AG04450 (cell line): ENCODE measurements at regions of chr14 and their contacts with region 1.

Region 1: DNA sequence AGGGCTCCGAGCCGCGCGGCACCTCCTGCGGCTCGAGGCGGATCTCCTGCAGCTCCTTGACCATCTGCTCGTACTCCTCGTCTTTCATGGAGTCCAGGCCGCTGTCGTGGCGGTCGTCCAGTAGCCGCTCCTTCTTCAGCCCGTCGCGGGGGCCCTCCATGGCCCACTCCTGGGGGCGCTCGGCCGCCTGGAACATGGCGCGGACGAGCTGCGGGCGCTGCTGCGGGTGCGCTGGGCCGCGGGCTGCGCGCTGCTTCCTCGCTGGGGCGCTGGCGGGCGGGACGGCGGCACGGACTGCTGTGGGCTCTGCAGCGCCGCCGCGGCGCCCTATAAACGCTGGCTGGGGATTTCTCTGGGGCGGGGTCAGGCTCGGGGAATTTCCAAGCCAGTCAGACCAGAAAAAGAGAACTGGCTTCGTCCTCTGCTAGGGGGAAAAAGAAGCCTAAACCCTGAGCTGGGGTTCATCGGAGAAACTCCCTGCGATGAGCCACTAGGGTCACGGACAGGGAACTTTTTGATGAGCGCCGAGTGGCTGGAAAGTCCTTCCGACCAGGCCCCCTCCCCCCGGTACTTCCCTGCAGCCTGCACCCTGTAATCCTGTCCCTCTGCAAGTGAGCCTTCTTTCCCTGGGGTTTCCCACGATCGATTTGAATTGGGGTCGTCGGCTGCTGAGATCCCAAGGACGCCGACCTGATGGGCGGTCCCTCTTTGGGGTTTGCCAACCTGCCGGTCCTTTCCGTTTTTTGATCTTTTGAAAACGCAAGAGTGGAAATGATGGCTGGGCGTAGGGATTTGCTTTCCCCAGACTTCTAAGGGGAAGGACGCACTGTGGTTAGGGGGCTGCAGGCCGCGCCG is at the start of gene NFKBIA:
- DNase-seq: no peak
- H3K4me3 ChIP-seq: peak within 1 kb of the TSS; percentile 94
- H3K27ac ChIP-seq: peak within 1 kb of the TSS; percentile 92
- H3K27me3 ChIP-seq: no peaks in the 10 kb centered on the region
- CTCF ChIP-seq: peak; percentile 43
- polyA plus RNA-seq, gene NFKBIA: 51.6 and 80.2 TPM in 2 replicates

Region 2: DNA sequence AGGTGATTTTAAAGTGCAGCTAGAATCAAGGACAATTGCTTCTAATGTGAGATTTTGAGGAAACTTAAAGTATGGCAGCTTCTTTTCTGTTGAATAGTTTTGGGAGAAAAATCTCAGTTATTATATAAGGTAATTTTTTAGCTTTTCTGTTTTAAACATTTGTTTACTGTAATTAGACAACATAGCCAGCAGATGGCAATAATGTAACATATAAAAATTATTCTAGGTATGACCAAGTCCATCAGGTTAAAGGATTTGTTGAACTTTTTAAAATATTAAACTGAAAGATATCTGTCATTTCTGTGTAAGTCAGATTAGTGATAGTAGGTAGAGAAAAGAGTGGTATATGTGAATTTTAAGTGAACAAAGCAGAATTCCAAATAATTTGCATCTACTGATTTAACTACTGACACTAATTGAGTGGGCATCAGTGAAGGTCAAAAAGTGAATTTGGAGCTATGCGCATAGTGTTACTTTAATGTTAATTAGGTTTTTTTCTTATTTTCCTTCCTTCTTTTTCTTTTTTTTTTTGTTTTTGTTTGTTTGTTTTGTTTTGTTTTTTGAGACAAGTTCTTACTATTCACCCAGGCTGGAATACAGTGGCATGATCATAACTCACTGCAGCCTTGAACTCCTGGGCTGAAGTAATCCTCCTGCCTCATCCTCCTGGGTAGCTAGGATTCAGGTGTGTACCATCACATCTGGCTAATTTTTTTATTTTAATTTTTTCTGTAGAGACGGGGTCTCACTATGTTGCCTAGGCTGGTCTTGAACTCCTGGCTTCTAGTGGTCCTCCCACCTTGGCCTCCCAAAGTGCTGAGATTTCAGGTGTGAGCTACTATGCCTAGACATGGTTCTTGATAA is 263.7 kb before region 1 on chr14:
- CTCF ChIA-PET with region 1: interaction called, 418 read pairs
- POLR2A ChIA-PET with region 1: interaction called, 4 read pairs
- DNase-seq: no peak
- H3K4me3 ChIP-seq: no peak overlapping the region
- H3K27ac ChIP-seq: no peak overlapping the region
- H3K27me3 ChIP-seq: no peaks in the 10 kb centered on the region
- CTCF ChIP-seq: peak; percentile 29

Region 3: DNA sequence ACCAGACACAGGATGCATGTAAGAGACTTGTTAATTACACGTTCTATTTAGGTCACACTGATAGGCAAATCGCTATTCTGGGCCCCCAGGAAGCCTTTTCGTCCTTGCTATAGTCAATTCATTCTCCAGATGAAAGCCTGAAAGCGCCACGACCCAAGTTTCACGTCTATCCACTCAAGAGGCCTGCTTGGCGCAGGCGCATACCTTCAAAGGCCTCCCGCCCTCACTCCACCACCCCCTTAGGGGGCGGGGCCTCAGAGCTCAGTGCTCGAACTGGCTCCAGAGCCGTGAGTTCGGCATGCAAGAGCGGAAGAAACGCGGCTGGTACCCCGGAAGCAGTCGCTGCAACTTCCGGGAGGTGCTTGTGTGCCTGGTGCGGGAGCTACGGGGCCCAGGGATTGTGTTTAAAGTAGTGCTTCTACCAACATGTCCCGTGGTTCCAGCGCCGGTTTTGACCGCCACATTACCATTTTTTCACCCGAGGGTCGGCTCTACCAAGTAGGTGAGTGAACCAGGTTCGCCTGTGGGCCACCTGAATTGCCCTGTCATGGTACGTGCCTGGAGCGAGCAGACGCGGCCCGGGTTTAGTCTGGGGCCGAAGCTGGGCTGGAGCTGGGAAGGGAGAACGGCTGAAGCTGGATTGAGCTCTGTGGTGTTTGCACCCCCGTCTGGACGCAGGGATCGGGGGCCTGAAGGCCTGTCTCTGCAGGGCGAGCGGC is 112.5 kb before region 1 on chr14 and contains the start of gene PSMA6:
- CTCF ChIA-PET with region 1: interaction called, 7 read pairs
- POLR2A ChIA-PET with region 1: interaction called, 25 read pairs
- DNase-seq: peak; percentile 96
- H3K4me3 ChIP-seq: peak within 1 kb of the TSS; percentile 94
- H3K27ac ChIP-seq: peak within 1 kb of the TSS; percentile 89
- H3K27me3 ChIP-seq: no peaks in the 10 kb centered on the region
- CTCF ChIP-seq: no peak
- polyA plus RNA-seq, gene PSMA6: 233 and 300 TPM in 2 replicates

Region 4: GRCh38 chr14:35336494-35337268 is 68.0 kb before region 1 on chr14:
- CTCF ChIA-PET with region 1: no interaction called
- POLR2A ChIA-PET with region 1: interaction called, 12 read pairs
- DNase-seq: peak; percentile 59
- H3K4me3 ChIP-seq: no peak overlapping the region
- H3K27ac ChIP-seq: peak overlapping the region; percentile 77
- H3K27me3 ChIP-seq: no peaks in the 10 kb centered on the region
- CTCF ChIP-seq: no peak

Region 5: DNA sequence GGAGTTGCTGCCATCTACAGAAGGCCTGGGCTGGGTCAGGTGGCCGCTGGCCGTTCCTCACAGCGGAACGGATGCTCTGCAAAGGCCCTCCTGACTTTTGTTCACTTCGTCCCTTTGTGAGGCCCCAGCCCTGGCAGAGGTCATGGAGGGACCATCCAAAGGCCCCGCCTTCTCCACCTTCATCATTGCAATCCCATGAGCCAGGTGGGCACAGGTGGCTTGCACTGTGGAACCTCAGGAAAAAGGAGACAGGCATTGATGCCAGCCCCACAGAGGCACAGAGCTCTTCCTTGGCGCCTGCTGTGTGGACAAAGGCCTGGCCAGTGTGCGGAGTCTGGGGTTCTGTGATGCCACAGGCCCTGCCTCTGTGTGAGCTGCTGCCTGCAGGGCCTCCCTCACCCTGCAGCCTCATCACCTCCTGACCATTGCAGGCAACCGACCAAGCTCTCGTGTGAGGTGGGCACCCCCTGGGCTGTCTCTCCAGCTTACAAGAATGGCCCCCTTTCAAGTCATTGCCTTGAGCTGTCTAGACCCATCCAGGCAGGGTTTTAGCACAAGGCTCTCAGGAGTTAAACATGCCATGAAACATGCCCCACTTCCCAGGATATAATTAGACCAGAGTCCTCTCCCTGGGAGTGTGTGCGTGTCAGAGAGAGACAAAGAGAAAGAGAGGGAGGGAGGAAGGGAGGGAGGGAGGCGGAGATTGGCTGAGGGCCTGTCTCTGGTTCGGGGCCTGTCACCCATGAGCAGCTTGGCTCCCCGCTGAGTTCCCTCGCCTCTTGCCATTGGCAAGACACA is 19.4 kb before region 1 on chr14:
- CTCF ChIA-PET with region 1: interaction called, 7 read pairs
- POLR2A ChIA-PET with region 1: interaction called, 22 read pairs
- DNase-seq: no peak
- H3K4me3 ChIP-seq: no peak overlapping the region
- H3K27ac ChIP-seq: peak overlapping the region; percentile 98
- H3K27me3 ChIP-seq: no peaks in the 10 kb centered on the region
- CTCF ChIP-seq: no peak

Region 6: DNA sequence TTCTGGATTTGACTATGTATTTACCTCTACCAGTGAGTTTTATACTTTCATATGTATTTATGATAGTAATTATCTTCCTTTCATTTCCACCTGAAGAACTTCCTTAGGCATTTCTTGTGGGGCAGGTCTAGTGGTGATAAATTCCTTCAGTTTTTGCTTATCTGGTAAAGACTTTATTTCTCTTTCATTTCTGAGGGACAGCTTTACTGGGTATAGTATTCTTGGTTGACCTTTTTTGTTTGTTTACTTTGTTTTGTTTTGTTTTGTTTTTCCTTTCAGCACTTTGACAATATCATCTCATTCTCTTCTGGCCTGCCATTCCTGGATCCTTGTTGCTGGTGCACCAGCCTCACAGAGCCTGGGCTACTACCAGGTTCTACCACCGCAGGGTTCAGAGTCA is 53.8 kb after region 1 on chr14:
- CTCF ChIA-PET with region 1: no interaction called
- POLR2A ChIA-PET with region 1: no interaction called
- DNase-seq: no peak
- H3K4me3 ChIP-seq: no peak overlapping the region
- H3K27ac ChIP-seq: no peak overlapping the region
- H3K27me3 ChIP-seq: peaks cover 2% of the 10 kb centered on the region
- CTCF ChIP-seq: no peak